IMR-90 (cell line): ENCODE measurements at regions of chr10 and their contacts with region 1.

Region 1: GRCh38 chr10:72719718-72720592 is 28.0 kb downstream of the MCU start:
- DNase-seq: no peak
- ATAC-seq: peak; percentile 40; the same call in 1 of the 2 replicates
- H3K4me3 ChIP-seq: no peak overlapping the region
- H3K27ac ChIP-seq: no peak overlapping the region
- H3K4me1 ChIP-seq: peaks cover 7% of the 10 kb centered on the region
- H3K27me3 ChIP-seq: no peaks in the 10 kb centered on the region
- CTCF ChIP-seq: no peak
- POLR2A ChIP-seq: no peak
- RAD21 ChIP-seq: no peak

Region 2: DNA sequence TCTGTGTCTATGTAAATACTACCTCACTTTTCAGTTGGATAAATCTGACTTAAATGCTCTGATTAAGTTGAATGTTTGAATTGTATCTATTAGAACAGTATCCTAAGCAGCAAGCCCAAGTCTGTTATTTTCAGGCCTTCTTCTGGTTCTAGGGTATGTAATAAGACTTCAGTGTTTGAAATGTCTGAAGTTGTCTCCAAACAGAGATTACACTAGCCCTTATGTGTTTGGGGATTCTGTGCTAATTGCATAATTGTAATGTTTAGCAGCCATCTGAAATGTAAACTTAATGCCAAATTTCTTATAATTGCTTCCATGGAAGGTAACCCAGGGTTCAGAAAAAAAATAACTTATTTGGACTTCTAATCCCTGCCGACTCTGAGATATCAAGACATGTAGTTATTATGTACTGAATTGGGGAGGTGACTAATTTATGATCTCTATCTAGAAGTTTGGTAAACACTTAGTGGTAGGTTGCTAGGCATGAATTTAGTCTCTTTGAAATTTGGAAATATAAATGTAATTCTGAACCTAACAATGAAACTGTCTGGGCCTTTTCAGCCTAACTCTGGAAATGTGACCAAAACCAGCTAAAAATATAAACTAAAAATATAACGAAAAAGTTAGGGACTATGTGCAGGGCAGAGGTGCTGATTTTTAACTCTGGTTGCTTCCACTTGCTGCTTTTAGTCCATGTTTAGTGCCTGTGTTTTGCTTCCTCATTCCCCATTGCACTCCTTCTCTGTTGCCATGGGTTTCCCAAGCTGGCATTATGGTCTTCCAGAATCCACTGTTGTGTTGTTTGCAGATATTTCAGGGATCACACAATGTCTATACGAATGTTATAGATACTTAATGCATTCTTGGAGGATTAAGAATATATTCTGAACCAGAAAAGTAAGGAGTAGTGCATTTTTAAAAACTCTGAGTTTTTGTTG is 26.7 kb after region 1 on chr10:
- CTCF ChIA-PET with region 1: interaction called, 3 read pairs
- POLR2A ChIA-PET with region 1: interaction called, 13 read pairs
- dilution Hi-C with region 1: no loop called
- in situ Hi-C with region 1: no loop called
- intact Hi-C with region 1: no loop called
- DNase-seq: no peak
- ATAC-seq: peak; percentile 51
- H3K4me3 ChIP-seq: no peak overlapping the region
- H3K27ac ChIP-seq: no peak overlapping the region
- H3K4me1 ChIP-seq: peaks cover 2% of the 10 kb centered on the region; the same call in 1 of the 2 replicates
- H3K27me3 ChIP-seq: no peaks in the 10 kb centered on the region
- CTCF ChIP-seq: no peak
- POLR2A ChIP-seq: no peak
- RAD21 ChIP-seq: no peak